Activated T-helper 2 cell treated with anti-CD3 and anti-CD28 coated beads, Interferon-gamma antibody, Interleukin-2, Interleukin-4, amounts not matched to agents 10 μg/mL and 5 μg/mL and 100 μg/mL, durations not matched to agents 14 hours and 24 hours and 36 hours (primary cell): ENCODE measurements at regions of chr17 and their contacts with region 1.

Region 1: GRCh38 chr17:74852237-74853047 is 7.2 kb downstream of the GRIN2C start:
- DNase-seq: peak; percentile 59
- H3K4me3 Mint-ChIP-seq: peak overlapping the region; percentile 78
- H3K27ac Mint-ChIP-seq: no peak overlapping the region
- H3K4me1 Mint-ChIP-seq: peaks cover 8% of the 10 kb centered on the region
- H3K27me3 Mint-ChIP-seq: peaks cover 39% of the 10 kb centered on the region

Region 2: DNA sequence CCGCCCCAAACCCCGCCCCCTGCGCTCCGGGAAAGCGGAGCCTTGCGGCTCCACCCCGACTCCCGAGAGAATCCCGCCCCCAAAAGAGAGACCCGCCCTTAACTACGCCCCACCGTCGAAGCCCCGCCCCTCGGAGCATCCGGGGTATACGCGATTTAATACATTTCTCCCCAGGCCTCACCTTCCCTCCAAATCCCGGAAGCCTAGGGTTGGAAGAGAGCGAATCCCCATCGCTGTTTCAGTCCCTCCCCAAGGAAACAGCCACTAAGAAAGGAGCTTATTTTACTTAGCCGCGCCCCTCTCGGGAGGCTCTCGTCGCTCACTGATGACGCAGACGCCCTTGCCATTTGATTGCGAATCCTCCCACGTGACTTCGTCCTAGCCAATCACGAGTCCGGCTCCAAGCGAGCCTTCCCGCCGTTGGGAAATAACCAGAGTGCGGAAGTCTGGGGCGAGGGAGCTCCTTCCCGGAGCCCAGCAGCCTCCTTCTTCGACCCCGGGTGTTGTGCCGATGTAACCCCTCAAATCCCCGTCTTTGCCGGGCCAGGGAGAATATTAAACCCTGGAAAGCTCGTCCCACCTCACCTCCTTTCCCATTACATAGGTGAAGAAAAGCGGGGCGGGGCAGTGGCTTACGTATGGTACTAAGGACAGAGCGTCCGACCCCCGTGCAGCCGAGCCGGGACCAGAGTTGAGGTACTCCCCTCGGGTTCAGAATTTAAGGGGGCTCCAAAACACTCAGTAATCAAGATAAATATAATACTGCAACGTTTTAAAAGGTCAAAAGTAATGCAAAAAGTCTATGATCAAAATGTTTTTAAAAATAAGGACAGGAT is 20.8 kb after region 1 on chr17:
- intact Hi-C with region 1: loop called (anchors 1 kb)
- DNase-seq: peak; percentile 97
- H3K4me3 Mint-ChIP-seq: peak overlapping the region; percentile 85
- H3K27ac Mint-ChIP-seq: peak overlapping the region; percentile 73
- H3K4me1 Mint-ChIP-seq: peaks cover 17% of the 10 kb centered on the region
- H3K27me3 Mint-ChIP-seq: peaks cover 2% of the 10 kb centered on the region